Esophagus muscularis mucosa (tissue), 4 donors: ENCODE measurements at regions of chr11 and their contacts with region 1.

Region 1: DNA sequence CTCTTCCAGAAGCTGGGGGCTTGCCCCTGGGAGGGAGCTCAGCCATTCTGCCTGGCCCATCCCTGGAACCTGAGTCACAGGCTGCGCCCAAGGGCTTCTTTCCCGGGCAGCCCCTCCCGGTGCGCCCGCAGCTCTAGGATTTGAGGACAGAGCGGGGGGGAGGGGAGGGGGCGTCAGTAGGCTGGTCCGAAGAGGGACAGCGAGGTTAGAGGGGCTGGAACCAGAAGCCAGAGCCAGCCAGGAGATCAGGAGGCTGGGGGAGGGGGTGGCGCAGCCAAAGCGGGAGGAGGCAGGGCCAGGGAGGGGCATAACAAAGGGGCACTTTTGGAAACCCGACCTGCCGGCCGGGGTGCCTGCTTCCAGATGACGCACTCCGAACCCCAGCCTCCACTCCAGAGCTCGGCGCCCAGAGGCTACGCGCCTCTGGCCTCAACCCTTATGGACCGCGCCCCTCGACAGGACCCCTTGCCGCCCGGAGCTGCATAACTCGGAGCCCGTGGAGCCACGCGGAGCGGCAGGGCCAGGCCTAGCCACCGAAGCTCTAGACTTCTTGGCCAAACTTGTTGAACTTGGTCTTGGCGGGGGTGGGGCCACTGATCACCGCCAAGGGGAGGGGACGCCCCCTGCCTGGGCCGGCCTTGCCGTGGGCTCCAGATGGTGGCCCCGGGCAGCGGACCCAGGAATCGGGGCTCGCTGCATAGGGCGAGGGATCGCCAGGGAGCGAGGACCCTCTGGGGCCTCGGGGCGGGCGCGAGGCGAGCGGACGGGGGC is 744 bp downstream of the PACSIN3 start:
- DNase-seq: no peak
- H3K4me3 ChIP-seq: peak overlapping the region; percentile 74 to 94 (median 83)
- H3K27ac ChIP-seq: peak overlapping the region; percentile 91 to 97 (median 95)
- H3K4me1 ChIP-seq: peaks cover 40 to 72% (median 70%) of the 10 kb centered on the region in 4 donors
- H3K27me3 ChIP-seq: peaks cover 0 to 5% (median 0%) of the 10 kb centered on the region in 4 donors
- CTCF ChIP-seq: no peak
- EP300 ChIP-seq: no peak
- POLR2A ChIP-seq: no peak

Region 2: DNA sequence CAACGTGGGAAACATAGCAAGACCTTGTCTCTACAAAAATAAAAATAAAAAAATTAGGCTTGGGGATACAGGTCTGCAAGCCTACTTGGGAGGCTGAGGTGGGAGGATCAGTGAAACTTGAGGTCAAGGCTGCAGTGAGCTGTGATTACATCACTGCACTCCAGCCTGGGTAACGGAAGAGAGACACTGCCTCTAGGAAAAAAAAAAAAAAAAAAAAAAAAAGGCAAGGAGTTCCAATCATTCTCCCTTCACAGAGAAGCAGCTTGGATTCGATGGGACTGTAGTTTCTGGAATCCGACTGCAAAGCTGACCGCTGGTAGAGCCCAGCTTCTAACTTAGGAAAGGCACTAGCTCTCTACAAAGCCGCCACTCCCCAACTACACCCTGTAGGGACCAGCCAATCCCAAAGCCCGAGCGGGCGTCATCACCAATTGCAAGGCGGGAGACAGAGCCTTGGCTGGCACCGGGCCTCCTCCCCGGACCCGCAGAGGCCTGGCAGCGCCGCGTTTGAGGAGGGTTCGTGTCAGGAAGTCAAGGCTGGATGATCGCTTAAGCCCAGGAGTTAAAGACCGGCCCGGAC is 28.6 kb after region 1 on chr11:
- intact Hi-C with region 1: loop called (anchors 2 kb)
- DNase-seq: peak; percentile 97
- H3K4me3 ChIP-seq: peak overlapping the region; percentile 63 to 70 (median 66)
- H3K27ac ChIP-seq: peak overlapping the region; percentile 95 to 98 (median 96)
- H3K4me1 ChIP-seq: peaks cover 31 to 47% (median 42%) of the 10 kb centered on the region in 4 donors
- H3K27me3 ChIP-seq: no peaks in the 10 kb centered on the region
- CTCF ChIP-seq: no peak
- EP300 ChIP-seq: no peak
- POLR2A ChIP-seq: no peak